GM18951 (cell line): ENCODE measurements at regions of chr19 and their contacts with region 1.

Region 1: GRCh38 chr19:50794439-50795237 is 4.4 kb downstream of the ACP4 start:
- POLR2A ChIP-seq: peak; percentile 60

Region 2: GRCh38 chr19:50357178-50358100 is 437.2 kb before region 1 on chr19:
- in situ Hi-C with region 1: loop called (anchors 25 kb)
- POLR2A ChIP-seq: peak; percentile 52

Region 3: GRCh38 chr19:50909240-50910070 is 114.8 kb after region 1 on chr19:
- in situ Hi-C with region 1: no loop called
- POLR2A ChIP-seq: no peak

Region 4: DNA sequence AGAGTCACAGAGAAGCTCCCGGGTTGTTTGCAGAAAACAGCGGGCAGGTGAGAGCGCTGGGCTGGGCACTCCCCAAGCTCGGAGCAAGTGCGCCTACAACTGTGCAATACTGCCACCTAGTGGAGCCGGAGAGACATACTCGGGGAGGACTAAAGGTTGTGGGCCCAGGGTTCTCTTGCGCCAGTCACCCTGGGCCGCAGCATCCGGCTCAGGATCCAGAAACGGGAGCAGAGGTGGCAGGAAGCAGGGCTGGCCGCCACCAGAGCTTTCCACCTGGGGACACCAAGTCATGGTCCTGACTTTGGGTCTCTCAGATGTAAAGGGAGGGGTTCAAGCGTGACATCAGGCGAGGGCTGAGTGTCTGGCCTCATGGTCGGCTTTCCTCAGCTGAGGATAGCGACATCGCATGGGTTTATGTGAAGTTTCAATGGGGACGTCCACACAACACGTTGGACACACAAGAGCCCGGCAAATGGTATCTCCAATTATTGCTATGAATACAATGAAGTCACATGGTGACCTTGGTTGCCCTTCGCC is 127.7 kb after region 1 on chr19:
- in situ Hi-C with region 1: loop called (anchors 10 kb)
- POLR2A ChIP-seq: no peak